A673 (cell line): ENCODE measurements at regions of chr12 and their contacts with region 1.

Region 1: GRCh38 chr12:62934799-62935674 is at the start of gene PPM1H:
- DNase-seq: peak; percentile 33
- H3K4me3 ChIP-seq: peak within 1 kb of the TSS; percentile 56
- H3K27ac ChIP-seq: no peak within 1 kb of the TSS
- H3K4me1 ChIP-seq: peaks cover 6% of the 10 kb centered on the region
- H3K27me3 ChIP-seq: peaks cover 70% of the 10 kb centered on the region
- CTCF ChIP-seq: 0 out of 2 replicates have a peak, but pooled peaks have one; percentile 29
- total RNA-seq, gene PPM1H: 0.04 and 0.35 TPM in 2 replicates

Region 2: DNA sequence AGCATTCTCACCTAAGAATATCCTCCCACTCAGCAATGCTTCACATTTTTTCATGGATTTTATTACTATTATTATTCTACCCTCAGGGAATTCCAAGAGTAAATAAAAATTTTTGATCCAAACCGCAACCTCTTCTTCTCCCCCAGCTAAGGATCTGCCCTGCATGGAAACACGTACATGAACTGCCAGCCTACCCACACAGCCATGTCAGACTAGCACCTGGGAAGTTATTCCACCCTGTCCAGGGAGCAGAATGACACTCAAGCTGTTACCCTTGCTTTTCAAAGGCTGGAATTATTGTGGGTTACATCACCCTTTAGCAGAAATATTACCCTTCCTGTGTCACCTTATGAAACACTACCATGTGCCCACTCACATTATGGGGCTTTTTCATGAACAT is 902.2 kb before region 1 on chr12:
- CTCF ChIA-PET with region 1: no interaction called
- POLR2A ChIA-PET with region 1: no interaction called
- intact Hi-C with region 1: no loop called
- DNase-seq: no peak
- H3K4me3 ChIP-seq: no peak overlapping the region
- H3K27ac ChIP-seq: no peak overlapping the region
- H3K4me1 ChIP-seq: no peaks in the 10 kb centered on the region
- H3K27me3 ChIP-seq: no peaks in the 10 kb centered on the region
- CTCF ChIP-seq: no peak

Region 3: GRCh38 chr12:62971769-62972525 is 36.9 kb after region 1 on chr12:
- CTCF ChIA-PET with region 1: no interaction called
- POLR2A ChIA-PET with region 1: no interaction called
- intact Hi-C with region 1: loop called (anchors 2 kb)
- DNase-seq: no peak
- H3K4me3 ChIP-seq: no peak overlapping the region
- H3K27ac ChIP-seq: no peak overlapping the region
- H3K4me1 ChIP-seq: peaks cover under 1% of the 10 kb centered on the region
- H3K27me3 ChIP-seq: no peaks in the 10 kb centered on the region
- CTCF ChIP-seq: no peak